Common myeloid progenitor, CD34-positive (primary cell): ENCODE measurements at regions of chr1 and their contacts with region 1.

Region 1: GRCh38 chr1:30801771-30802198 is 44.2 kb upstream of the LAPTM5 start:
- DNase-seq: peak; percentile 57 to 74 (median 63)
- H3K4me3 ChIP-seq: no peak overlapping the region
- H3K27ac ChIP-seq: no peak overlapping the region
- H3K4me1 ChIP-seq: peaks cover 0 to 12% (median 10%) of the 10 kb centered on the region in 4 experiments
- H3K27me3 ChIP-seq: peaks cover 5 to 56% (median 49%) of the 10 kb centered on the region in 5 experiments

Region 2: GRCh38 chr1:30572192-30572591 is 229.6 kb before region 1 on chr1:
- CTCF ChIA-PET with region 1: no interaction called
- POLR2A ChIA-PET with region 1: no interaction called
- DNase-seq: no peak
- H3K4me3 ChIP-seq: no peak overlapping the region
- H3K27ac ChIP-seq: no peak overlapping the region
- H3K4me1 ChIP-seq: no peaks in the 10 kb centered on the region
- H3K27me3 ChIP-seq: peaks cover 0 to 15% (median 0%) of the 10 kb centered on the region in 5 experiments

Region 3: GRCh38 chr1:30718636-30719405 is 83.0 kb before region 1 on chr1:
- CTCF ChIA-PET with region 1: interaction called, 24 read pairs
- POLR2A ChIA-PET with region 1: no interaction called
- DNase-seq: peak; percentile 94 to 96 (median 96)
- H3K4me3 ChIP-seq: peak overlapping the region; percentile 51 to 80 (median 67)
- H3K27ac ChIP-seq: peak overlapping the region; percentile 85 to 93
- H3K4me1 ChIP-seq: peaks cover 0 to 28% (median 15%) of the 10 kb centered on the region in 4 experiments
- H3K27me3 ChIP-seq: peaks cover 0 to 2% (median 0%) of the 10 kb centered on the region in 5 experiments

Region 4: GRCh38 chr1:30816211-30817076 is 14.7 kb after region 1 on chr1:
- CTCF ChIA-PET with region 1: interaction called, 40 read pairs
- POLR2A ChIA-PET with region 1: interaction called, 3 read pairs
- DNase-seq: no peak
- H3K4me3 ChIP-seq: no peak overlapping the region
- H3K27ac ChIP-seq: no peak overlapping the region
- H3K4me1 ChIP-seq: no peaks in the 10 kb centered on the region
- H3K27me3 ChIP-seq: peaks cover 2 to 99% (median 53%) of the 10 kb centered on the region in 5 experiments

Region 5: GRCh38 chr1:30866594-30866993 is 64.8 kb after region 1 on chr1:
- CTCF ChIA-PET with region 1: interaction called, 15 read pairs
- POLR2A ChIA-PET with region 1: interaction called, 3 read pairs
- DNase-seq: no peak
- H3K4me3 ChIP-seq: no peak overlapping the region
- H3K27ac ChIP-seq: no peak overlapping the region
- H3K4me1 ChIP-seq: peaks cover 0 to 3% (median 1%) of the 10 kb centered on the region in 4 experiments
- H3K27me3 ChIP-seq: peaks cover 6 to 86% (median 10%) of the 10 kb centered on the region in 5 experiments

Region 6: DNA sequence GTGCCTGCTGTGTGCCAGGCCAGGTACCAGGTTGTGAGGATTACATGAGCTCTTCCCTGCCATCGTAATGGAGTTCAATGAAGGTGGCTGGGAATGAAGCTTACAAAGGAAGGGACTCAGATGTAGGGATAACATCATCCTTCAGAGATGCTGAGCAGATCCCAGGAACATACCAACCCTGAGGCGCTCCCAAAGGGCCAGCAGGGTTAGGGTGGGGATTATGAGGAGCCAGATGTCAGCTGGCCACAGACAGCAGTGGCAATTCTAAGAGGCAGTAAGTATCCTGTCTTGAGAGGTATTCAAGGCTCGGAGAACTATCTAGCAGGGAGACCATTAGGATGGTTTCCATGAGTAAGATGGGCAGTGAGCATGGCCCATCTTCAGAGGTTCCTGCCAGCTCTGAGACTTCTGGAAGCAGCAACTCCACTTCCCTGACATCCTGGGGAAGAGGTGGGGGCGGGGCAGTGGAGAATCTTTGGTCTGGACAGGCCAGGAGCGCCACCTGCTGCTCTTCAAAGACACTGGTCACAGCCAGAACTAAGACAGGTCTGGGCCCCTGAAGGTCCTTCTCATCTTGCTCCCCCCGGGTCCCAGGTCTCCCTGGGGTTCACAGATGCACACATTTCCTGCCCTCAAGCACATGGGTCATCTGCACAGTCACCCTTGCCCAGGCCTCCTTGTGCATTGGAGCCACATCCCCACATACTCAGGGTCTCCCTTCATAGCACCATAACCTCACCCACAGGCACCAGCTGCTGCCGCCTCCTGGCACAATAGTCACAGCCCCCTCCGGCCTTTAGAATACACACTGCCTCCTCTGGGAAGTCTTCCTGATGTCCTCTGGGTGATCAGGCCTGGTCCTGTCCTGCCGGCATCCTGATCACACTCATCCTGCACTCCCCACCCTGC is 109.5 kb after region 1 on chr1:
- CTCF ChIA-PET with region 1: interaction called, 252 read pairs
- POLR2A ChIA-PET with region 1: no interaction called
- DNase-seq: peak; percentile 62 to 76 (median 69)
- H3K4me3 ChIP-seq: no peak overlapping the region
- H3K27ac ChIP-seq: no peak overlapping the region
- H3K4me1 ChIP-seq: peaks cover 0 to 29% (median 16%) of the 10 kb centered on the region in 4 experiments
- H3K27me3 ChIP-seq: peaks cover 0 to 44% (median 33%) of the 10 kb centered on the region in 5 experiments

Region 7: DNA sequence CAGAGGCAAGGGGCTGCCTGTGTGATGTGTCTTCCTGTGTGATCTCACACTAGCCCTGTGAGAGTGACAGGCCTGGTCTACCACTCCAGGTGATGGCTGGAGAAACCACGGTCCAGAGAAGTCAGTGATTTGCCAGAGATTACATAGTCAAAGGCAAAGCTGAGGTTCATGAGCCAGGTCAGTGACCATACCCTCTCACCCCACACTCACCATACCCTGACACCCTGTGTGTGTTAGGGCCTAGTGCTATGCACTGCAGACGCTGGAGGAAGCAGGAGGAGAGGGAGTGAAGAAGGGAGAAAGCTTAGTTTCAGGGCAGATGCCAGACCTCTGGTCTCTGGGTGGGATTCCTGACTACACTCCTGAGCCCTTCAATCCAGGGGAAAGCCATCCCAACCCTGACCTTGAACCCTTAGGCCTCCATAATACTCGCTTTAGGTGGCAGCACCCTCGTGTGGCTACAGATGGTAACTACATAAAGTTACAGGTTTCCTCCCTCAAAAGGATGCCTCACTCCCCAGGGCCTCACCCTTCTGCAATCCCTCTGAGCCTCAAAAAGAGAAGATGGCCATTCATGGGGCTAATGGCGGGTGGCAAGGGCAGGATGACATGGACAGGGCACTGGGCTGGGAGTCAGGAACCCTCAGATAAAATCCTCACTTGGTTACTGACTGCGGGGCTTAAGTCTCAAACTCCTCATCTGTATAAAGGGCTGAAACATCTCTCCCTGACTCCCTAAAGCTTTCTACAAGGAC is 127.5 kb after region 1 on chr1:
- CTCF ChIA-PET with region 1: interaction called, 161 read pairs
- POLR2A ChIA-PET with region 1: interaction called, 3 read pairs
- DNase-seq: peak; percentile 39 to 70 (median 59)
- H3K4me3 ChIP-seq: no peak overlapping the region
- H3K27ac ChIP-seq: no peak overlapping the region
- H3K4me1 ChIP-seq: no peaks in the 10 kb centered on the region
- H3K27me3 ChIP-seq: no peaks in the 10 kb centered on the region